ENCODE measurements at regions of chr15 and their contacts with region 1.

Region 1: DNA sequence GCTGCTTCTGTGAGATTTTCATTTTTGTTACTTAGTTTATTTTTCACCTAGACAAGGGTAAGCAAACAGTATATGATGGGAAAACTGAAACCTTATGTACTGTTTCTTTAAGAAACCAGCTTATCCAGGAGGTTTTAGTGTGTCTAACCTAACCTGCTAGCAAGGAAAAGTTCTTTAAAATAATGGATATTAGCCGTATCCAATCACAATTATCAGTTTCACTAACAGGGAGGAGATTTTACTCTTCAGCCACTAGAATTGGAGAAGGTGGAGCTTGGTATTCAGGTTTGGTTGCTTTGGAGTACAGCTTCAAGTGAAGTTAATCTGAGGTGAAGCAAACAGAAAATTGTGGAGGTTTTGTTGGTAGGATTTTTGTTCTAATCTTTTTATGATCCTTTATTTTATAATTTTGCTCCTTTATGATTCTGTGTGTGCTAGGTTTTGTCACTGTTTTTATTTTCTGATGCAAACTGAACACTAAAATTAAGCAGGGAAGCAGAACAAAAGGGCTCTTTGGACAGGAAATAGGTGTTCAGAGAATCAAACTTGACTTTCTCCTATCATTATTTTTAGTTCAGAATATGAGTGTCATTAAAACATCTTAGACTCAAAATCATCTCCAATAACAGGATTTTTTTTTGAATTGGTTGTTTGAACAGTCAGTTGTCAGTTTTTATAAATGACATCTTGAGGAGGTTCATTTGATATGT is 13.0 kb downstream of the ZFAND6 start:
- DNase-seq: peak; percentile 15 to 88
- H3K4me3 ChIP-seq: peak overlapping the region; percentile 54
- H3K27ac ChIP-seq: peak overlapping the region; percentile 50
- H3K4me1 ChIP-seq: peaks cover 38% of the 10 kb centered on the region
- H3K27me3 ChIP-seq: no peaks in the 10 kb centered on the region
- CTCF ChIP-seq: no peak

Region 2: GRCh38 chr15:80087100-80087499 is 14.7 kb after region 1 on chr15:
- CTCF ChIA-PET with region 1: no interaction called
- POLR2A ChIA-PET with region 1: no interaction called
- intact Hi-C with region 1: loop called (anchors 1 kb)
- DNase-seq: no peak
- H3K4me3 ChIP-seq: no peak overlapping the region
- H3K27ac ChIP-seq: no peak overlapping the region
- H3K4me1 ChIP-seq: no peaks in the 10 kb centered on the region
- H3K27me3 ChIP-seq: no peaks in the 10 kb centered on the region
- CTCF ChIP-seq: no peak

Region 3: DNA sequence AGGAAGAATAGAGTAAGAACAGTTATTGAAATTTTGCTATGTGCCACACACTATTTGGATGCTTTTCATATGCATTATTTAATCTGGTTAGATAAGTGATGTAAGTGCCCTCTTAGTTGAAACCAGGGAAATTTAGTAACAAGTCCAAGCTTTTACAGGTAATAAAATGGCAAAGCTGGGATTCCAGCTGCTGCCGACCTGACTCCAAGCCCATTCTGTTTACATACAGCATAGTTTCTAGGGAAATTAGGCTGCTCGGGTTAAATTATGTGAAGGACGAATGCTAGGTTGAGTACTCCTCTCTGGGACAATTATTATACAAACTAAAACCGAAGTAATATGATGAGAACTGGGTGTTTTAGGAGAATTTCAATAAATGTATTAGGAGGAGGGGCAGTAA is 41.7 kb after region 1 on chr15:
- CTCF ChIA-PET with region 1: no interaction called
- POLR2A ChIA-PET with region 1: no interaction called
- intact Hi-C with region 1: loop called (anchors 5 kb)
- DNase-seq: no peak
- H3K4me3 ChIP-seq: no peak overlapping the region
- H3K27ac ChIP-seq: no peak overlapping the region
- H3K4me1 ChIP-seq: 0 out of 2 replicates have a peak, but pooled peaks cover 5% of the 10 kb centered on the region
- H3K27me3 ChIP-seq: no peaks in the 10 kb centered on the region
- CTCF ChIP-seq: no peak